Activated CD4-positive, alpha-beta T cell treated with anti-CD3 and anti-CD28 coated beads for 36 hours (primary cell): ENCODE measurements at regions of chr15 and their contacts with region 1.

Region 1: DNA sequence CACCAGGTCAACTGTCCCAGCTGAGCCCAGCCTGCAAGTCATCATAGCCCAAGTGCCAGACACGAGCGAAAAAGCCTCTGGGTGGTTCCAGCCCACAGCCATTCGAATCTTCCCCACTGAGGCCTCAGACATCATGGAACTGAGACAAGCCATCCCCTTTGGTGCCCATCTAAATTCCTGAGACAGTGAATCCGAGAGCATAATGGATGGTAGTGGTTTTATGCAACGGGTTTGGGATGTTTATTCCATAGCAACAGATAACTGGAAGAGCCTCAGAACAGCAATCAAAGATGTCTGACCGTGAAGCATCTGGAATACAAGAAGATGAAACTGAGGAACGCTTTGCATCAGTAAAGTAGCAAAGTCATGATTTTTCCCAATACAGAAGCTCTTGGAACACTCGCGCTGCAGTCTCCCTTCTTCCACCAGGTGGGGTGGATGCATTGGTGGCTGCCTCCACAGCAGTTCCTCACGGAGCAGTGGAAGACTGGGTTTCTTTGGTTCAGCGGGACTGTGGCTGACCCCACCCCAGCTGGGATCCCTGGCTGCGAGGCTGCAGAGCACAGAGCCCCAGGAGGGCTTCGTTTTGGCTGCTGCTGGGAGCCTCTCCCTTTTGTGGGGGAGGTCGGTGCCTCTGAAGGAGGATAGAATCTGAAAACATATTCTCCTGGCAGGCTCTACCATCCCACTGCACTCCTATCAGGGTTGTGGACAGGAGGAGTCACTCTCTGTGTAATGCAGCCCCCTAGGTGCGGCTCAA is 26.4 kb upstream of the PDE8A start:
- DNase-seq: peak; percentile 58
- ATAC-seq: peak; percentile 68
- H3K4me3 Mint-ChIP-seq: no peak overlapping the region
- H3K27ac Mint-ChIP-seq: no peak overlapping the region
- H3K4me1 Mint-ChIP-seq: peaks cover 9% of the 10 kb centered on the region
- H3K27me3 Mint-ChIP-seq: peaks cover 12% of the 10 kb centered on the region

Region 2: GRCh38 chr15:85044251-85044853 is 89.1 kb after region 1 on chr15:
- CTCF ChIA-PET with region 1: interaction called, 8 read pairs
- POLR2A ChIA-PET with region 1: no interaction called
- intact Hi-C with region 1: loop called (anchors 1 kb)
- DNase-seq: peak; percentile 68
- ATAC-seq: peak; percentile 57
- H3K4me3 Mint-ChIP-seq: no peak overlapping the region
- H3K27ac Mint-ChIP-seq: no peak overlapping the region
- H3K4me1 Mint-ChIP-seq: peaks cover 13% of the 10 kb centered on the region
- H3K27me3 Mint-ChIP-seq: no peaks in the 10 kb centered on the region

Region 3: GRCh38 chr15:85168642-85169173 is 213.4 kb after region 1 on chr15:
- CTCF ChIA-PET with region 1: interaction called, 4 read pairs
- POLR2A ChIA-PET with region 1: no interaction called
- intact Hi-C with region 1: loop called in 1 of 2 experiments (anchors 5 kb)
- DNase-seq: peak; percentile 71
- ATAC-seq: peak; percentile 58
- H3K4me3 Mint-ChIP-seq: no peak overlapping the region
- H3K27ac Mint-ChIP-seq: no peak overlapping the region
- H3K4me1 Mint-ChIP-seq: peaks cover 6% of the 10 kb centered on the region
- H3K27me3 Mint-ChIP-seq: peaks cover 21% of the 10 kb centered on the region